HEK293T (cell line): ENCODE measurements at regions of chr2 and their contacts with region 1.

Region 1: DNA sequence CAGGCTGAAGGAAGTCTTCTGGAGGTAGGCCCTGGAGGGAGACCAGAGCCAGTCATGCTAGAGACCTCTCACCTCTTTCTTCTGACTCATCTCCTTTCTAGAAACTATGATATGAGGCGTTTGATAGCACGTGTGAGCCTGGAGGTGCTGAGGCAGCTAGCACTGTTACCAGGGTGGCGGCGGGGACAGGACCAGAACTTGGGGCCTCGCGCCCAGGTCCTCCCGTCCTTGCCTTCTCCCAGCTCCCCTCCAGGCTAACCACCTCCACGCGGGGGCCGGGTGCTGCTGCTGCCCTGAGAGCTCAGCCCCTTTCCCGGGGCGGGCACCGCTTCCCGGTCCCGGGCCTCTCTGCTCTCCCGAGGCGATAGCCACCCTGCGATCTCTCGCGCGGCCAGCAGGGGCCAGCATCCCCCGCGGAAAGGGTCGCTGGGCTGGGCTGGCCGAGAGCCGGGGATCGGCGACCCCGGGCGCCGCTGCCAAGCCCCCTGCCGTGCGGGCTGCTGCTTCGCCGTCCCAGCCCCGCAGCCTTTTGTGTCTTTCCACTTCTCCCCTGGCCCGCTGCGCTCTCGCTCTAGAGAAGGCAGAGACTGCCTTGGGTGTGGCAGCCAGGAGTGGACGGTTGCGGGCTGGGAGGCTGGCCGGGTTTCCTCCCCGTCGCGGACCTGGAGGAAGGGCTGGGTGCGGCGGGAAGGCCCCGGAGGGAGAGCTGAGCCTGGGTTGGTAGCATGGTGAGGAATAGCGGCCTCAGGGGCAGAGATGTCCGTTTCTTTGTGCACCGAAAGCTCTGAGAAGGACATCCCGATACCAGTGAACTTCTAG is 49.1 kb downstream of the TMEM17 start:
- DNase-seq: peak; percentile 90

Region 2: GRCh38 chr2:62512384-62512783 is 55.5 kb after region 1 on chr2:
- CTCF ChIA-PET with region 1: no interaction called
- POLR2A ChIA-PET with region 1: no interaction called
- DNase-seq: no peak

Region 3: DNA sequence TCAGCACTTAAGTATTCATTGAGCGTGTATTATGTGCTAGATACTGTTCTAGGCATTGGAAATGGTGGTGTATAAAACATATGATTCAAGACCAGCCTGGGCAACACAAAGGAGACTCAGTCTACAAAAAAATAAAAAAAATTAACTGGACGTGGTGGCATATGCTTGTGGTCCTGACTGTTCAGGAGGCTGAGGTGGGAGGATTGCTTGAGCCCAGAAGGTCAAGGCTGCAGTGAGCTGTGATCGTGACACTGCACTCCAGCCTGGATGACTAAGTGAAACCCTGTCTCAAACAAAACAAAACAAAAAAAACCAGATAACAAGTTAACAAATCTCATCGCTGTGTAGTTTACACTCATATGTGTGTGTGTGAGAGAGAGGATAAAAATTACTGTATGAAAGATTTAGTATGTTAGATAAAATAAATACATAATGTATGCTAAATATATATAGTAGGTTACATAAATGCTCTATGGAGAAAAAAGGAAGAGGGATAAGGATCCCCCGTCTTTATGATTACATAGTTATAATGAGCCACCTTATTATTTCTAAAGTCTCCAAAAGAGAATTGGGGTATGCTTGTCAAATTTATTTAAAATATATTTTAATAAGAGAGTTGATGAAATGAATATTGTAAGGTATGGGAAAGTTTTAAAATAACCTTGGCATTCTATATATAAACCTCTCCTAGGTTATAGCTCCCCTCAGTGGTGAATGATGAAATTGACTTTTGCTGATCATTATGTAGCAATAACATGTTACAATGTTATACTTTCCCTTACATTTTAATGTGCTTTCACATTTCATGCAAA is 317.8 kb after region 1 on chr2:
- CTCF ChIA-PET with region 1: interaction called, 24 read pairs
- POLR2A ChIA-PET with region 1: no interaction called
- DNase-seq: peak; percentile 7

Region 4: DNA sequence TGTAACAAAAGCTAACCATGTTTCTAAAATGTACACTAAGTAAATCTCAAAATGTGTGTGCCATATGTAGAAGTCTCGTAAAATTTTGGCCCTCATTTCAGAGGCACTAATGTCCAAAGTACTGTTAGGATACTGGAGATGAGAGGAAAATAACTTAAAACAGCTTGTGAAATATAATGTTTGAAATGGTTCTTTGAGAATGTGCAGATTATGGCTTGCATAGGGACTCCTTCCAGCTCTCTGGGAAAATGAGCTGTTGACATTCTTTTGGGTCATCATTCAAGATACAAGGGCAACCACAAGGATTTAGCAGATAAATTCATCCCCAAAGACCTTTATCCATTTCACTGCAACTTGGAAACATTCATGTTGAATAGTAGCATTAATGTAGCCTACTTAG is 555.6 kb after region 1 on chr2:
- CTCF ChIA-PET with region 1: interaction called, 14 read pairs
- POLR2A ChIA-PET with region 1: no interaction called
- DNase-seq: no peak